GM23248 (cell line): ENCODE measurements at regions of chr12 and their contacts with region 1.

Region 1: DNA sequence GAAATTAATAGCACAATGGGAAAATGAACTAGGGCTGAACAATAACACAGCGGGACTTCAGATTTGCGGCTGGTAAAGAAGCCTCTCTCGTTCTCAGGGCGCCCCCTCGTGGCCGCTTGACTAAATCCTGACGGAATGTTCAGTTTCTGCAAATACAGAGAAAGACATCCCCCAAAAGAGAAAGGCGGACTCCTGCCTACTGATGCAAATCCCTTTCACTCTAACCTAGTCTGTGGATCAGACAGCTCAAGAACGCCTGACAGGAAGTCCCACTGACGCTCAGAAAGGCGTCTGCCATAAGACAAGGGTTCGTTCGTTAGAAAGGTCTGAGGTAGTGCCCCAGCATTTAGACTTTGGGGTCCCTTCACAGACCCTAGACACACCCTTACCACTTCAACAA is 2.5 kb downstream of the NUAK1 start:
- DNase-seq: peak; percentile 92
- H3K4me3 ChIP-seq: peak overlapping the region; percentile 88
- H3K27ac ChIP-seq: peak overlapping the region; percentile 73
- H3K4me1 ChIP-seq: peaks cover 55% of the 10 kb centered on the region
- H3K27me3 ChIP-seq: no peaks in the 10 kb centered on the region

Region 2: GRCh38 chr12:105420659-105421240 is 715.5 kb before region 1 on chr12:
- in situ Hi-C with region 1: loop called (anchors 5 kb)
- DNase-seq: peak; percentile 80
- H3K4me3 ChIP-seq: no peak overlapping the region
- H3K27ac ChIP-seq: no peak overlapping the region
- H3K4me1 ChIP-seq: peaks cover 39% of the 10 kb centered on the region
- H3K27me3 ChIP-seq: no peaks in the 10 kb centered on the region

Region 3: GRCh38 chr12:105705765-105706164 is 430.5 kb before region 1 on chr12:
- in situ Hi-C with region 1: loop called (anchors 5 kb)
- DNase-seq: peak; percentile 61
- H3K4me3 ChIP-seq: no peak overlapping the region
- H3K27ac ChIP-seq: no peak overlapping the region
- H3K4me1 ChIP-seq: 0 out of 2 replicates have a peak, but pooled peaks cover 16% of the 10 kb centered on the region
- H3K27me3 ChIP-seq: no peaks in the 10 kb centered on the region